ENCODE measurements at regions of chr15 and their contacts with region 1.

Region 1: DNA sequence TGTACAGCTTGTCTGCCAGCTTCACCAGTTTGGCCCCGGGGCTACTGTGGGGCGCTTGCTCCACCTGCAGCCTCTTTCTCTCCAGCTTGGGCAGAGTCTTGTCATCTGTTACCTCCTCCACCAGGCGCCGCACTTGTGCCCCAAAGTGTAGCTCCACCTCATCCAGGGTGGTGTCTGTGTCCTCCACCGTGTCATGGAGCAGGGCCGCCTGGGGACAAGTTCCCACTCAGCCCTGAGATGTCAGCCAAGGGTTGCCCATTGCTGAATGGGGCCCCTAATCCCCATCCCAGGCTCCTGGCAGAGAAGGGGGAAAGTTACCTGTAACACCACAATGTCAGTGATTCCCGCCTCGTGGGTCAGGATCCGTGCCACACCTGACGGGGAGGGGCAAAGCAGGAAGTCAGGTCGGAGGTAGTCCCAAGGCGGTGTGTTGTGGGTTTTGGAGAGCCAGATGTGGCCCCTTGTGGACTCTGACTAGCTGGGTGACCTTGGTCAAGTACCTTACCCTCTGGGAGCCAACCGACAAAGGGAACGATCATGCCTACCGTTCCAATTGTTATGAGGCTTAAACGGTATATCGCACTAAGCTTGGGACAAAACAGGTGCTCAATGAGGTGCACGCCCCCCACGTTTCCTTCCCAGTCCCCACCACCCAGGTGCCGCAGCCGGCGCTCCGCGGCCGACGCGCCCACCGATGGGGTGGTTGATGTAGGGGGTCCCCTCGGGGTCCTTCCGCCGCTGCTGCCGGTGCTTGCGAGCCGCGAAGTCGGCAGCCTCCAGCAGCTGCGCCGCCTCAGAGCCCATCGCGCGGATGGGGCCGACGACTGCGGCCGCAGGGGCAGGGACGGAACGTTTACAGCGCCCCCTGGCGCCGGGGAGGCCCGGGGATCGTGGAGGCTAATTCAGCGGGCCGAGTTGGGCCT is at the start of gene HDDC3:
- DNase-seq: peak; percentile 95
- H3K4me3 ChIP-seq: peak within 1 kb of the TSS; percentile 79
- H3K27ac ChIP-seq: peak within 1 kb of the TSS; percentile 81
- H3K4me1 ChIP-seq: peaks cover 61% of the 10 kb centered on the region
- CTCF ChIP-seq: peak; percentile 92
- total RNA-seq, gene HDDC3: 31.8 and 35.8 TPM in 2 replicates

Region 2: DNA sequence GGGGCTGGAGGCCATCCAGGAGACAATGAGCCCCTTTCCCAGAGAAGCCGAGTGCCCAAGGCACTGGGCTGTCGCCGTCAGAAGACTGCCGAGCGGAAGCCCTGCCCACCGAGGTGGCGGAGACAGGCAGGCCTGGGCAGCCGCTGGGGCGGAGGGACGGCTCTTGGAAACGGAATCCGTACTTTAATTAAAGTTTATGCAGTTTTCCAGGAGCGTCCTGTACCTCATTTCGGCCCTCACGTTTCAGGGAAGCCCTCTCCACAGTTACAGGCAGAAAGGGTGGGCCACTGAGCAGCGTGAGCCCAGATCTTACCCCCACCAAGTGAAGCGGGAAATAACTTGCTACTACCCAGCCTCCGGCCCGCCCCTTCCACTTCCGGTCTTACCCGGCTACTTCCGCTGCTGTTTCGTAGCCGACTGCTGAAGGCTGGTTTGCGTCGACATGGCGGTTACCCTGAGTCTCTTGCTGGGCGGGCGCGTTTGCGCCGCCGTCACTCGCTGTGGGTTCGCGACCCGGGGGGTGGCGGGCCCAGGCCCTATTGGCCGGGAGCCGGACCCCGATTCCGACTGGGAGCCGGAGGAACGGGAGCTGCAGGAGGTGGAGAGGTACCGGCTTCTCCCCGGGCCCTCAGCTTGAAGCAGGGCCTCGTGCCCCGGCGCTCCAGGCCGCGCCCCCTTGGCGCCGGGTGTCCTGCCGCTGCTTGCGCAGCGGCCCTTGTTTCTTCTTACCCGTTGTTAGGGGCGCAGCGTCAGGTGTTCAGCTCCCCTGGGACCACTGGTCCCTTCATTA is 666.5 kb before region 1 on chr15 and contains the start of gene NGRN:
- CTCF ChIA-PET with region 1: no interaction called
- POLR2A ChIA-PET with region 1: no interaction called
- intact Hi-C with region 1: loop called (anchors 5 kb)
- DNase-seq: peak; percentile 93
- H3K4me3 ChIP-seq: peak within 1 kb of the TSS; percentile 74
- H3K27ac ChIP-seq: peak within 1 kb of the TSS; percentile 81
- H3K4me1 ChIP-seq: peaks cover 43% of the 10 kb centered on the region
- CTCF ChIP-seq: no peak
- total RNA-seq, gene NGRN: 65.0 and 72.8 TPM in 2 replicates

Region 3: GRCh38 chr15:90648137-90649070 is 283.6 kb before region 1 on chr15:
- CTCF ChIA-PET with region 1: interaction called, 3 read pairs
- POLR2A ChIA-PET with region 1: interaction called, 3 read pairs
- intact Hi-C with region 1: loop called (anchors 1 kb)
- DNase-seq: peak; percentile 84
- H3K4me3 ChIP-seq: no peak overlapping the region
- H3K27ac ChIP-seq: no peak overlapping the region
- H3K4me1 ChIP-seq: peaks cover 7% of the 10 kb centered on the region
- CTCF ChIP-seq: peak; percentile 97

Region 4: GRCh38 chr15:90789462-90789861 is 142.5 kb before region 1 on chr15:
- CTCF ChIA-PET with region 1: no interaction called
- POLR2A ChIA-PET with region 1: interaction called, 3 read pairs
- intact Hi-C with region 1: loop called (anchors 2 kb)
- DNase-seq: no peak
- H3K4me3 ChIP-seq: no peak overlapping the region
- H3K27ac ChIP-seq: no peak overlapping the region
- H3K4me1 ChIP-seq: peaks cover 39% of the 10 kb centered on the region
- CTCF ChIP-seq: no peak

Region 5: GRCh38 chr15:90895336-90896117 is 36.5 kb before region 1 on chr15:
- CTCF ChIA-PET with region 1: interaction called, 16 read pairs
- POLR2A ChIA-PET with region 1: interaction called, 10 read pairs
- intact Hi-C with region 1: no loop called
- DNase-seq: no peak
- H3K4me3 ChIP-seq: no peak overlapping the region
- H3K27ac ChIP-seq: no peak overlapping the region
- H3K4me1 ChIP-seq: peaks cover 22% of the 10 kb centered on the region
- CTCF ChIP-seq: 0 out of 2 replicates have a peak, but pooled peaks have one; percentile 21

Region 6: DNA sequence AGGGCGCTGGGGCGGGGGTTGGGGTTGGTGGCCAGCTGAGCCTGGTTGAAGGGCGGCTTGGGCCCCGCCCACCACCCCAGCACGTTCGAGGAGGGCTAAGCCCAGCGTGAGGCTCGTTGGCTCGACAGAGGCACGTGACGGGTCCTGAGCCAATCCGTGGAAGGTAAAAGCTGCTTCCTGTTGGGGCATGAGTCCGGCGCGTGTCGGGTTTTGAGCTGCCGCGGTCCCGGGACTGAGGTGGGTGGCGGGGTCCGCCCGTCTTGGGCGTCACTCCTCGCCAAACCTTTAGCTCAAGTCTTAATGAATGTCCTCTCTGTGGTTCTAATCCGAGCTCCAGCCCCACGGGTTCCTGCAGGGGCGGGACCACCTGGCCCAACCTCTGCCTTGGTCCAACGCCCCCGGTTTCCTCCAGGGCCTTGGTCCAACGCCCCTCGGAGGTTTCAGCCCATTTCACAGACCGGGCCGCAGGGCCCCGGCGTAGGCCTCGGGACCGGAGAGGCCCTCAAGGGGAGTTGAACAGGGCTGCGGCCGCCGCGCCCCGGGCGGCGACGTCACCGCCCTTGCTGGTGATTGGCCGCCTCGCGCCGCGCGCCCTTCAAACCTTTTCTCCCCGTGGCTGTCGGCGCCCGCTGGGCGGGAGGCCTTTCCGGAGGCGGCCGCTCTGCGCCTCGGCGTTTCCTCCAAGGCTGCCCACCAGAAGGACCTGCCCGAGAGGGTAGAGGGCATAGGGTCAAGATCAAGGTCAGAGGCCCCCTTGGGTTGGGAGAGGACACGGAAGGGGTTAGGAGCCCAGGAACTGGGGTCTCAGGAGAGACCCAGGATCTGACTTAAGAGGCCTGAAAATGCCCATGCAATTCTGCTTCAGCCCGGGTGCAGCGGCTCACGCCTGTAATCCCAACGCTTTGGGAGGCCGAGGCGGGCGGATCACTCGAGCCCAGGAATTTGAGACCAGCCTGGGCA is 23.0 kb after region 1 on chr15 and contains the start of gene RCCD1:
- CTCF ChIA-PET with region 1: interaction called, 41 read pairs
- POLR2A ChIA-PET with region 1: interaction called, 58 read pairs
- intact Hi-C with region 1: loop called (anchors 1 kb)
- DNase-seq: peak; percentile 98
- H3K4me3 ChIP-seq: peak within 1 kb of the TSS; percentile 71
- H3K27ac ChIP-seq: peak within 1 kb of the TSS; percentile 89
- H3K4me1 ChIP-seq: peaks cover 18% of the 10 kb centered on the region
- CTCF ChIP-seq: no peak
- total RNA-seq, gene RCCD1: 74.8 and 77.7 TPM in 2 replicates

Region 7: GRCh38 chr15:91049378-91050127 is 117.6 kb after region 1 on chr15:
- CTCF ChIA-PET with region 1: interaction called, 6 read pairs
- POLR2A ChIA-PET with region 1: interaction called, 3 read pairs
- intact Hi-C with region 1: loop called (anchors 1 kb)
- DNase-seq: peak; percentile 76
- H3K4me3 ChIP-seq: no peak overlapping the region
- H3K27ac ChIP-seq: no peak overlapping the region
- H3K4me1 ChIP-seq: peaks cover 12% of the 10 kb centered on the region
- CTCF ChIP-seq: peak; percentile 85